Astrocyte of the cerebellum (primary cell): ENCODE measurements at regions of chr1 and their contacts with region 1.

Region 1: DNA sequence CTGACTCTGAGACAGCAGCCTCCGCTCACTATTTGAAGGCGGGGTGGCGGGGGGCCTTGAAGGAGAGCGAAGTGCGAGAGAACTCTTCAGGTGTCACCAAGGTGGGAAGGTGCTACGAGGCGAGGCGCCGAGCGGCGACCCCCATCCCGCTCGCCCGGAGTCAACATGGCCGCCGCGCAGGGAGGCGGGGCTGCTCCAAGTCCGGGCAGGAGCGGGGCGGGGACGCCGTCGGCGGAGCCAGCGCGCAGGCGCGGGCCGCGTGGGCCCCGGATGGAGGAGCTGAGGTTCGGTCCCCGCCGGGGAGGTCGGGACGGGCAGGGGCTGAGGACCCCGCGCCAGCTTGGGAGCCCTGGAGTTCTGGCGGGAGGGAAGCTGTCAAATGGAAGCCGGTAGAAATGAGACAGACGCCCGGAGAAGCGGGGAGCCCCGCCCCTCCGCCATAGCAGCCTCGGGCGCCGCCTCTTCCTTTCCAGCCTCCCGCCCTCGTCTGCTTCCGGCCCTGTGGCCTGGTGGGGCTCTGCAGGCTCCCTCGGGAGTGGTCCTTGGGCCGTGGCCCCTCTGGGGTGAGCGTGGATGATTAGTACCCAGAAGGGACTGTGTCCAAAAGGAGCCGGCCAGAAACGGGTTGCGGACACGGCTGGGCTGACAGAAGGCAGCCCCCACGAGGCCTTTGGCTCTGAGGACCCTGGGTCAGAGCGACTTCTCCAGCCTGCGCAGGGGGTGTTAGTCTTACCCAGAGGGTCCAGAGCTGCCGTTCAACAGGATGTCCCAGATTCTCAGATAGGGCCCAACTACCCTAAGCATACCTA is at the start of gene PIGV:
- DNase-seq: peak; percentile 38
- H3K4me3 ChIP-seq: peak within 1 kb of the TSS; percentile 62
- CTCF ChIP-seq: no peak

Region 2: GRCh38 chr1:26602378-26602959 is 185.4 kb before region 1 on chr1:
- in situ Hi-C with region 1: loop called (anchors 5 kb)
- DNase-seq: peak; percentile 50
- H3K4me3 ChIP-seq: no peak overlapping the region
- CTCF ChIP-seq: peak; percentile 75

Region 3: DNA sequence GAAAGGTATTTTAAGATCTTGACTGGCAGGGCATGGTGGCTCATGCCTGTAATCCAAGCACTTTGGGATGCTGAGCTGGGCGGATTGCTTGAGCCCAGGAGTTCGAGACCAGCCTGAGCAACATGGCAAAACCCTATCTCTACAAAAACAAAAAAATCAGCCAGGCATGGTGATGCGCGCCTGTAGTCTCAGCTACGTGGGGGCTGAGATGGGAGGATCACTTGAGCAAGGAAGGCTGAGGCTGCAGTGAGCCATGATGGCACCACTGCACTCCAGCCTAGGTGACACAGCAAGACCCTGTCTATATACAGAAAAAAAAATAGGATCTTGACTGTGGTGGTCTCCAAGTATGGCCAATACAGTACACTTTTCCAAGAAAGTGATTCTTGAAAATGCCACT is 76.1 kb before region 1 on chr1:
- in situ Hi-C with region 1: loop called (anchors 5 kb)
- DNase-seq: no peak
- H3K4me3 ChIP-seq: no peak overlapping the region
- CTCF ChIP-seq: no peak

Region 4: GRCh38 chr1:26833432-26834405 is 45.8 kb after region 1 on chr1:
- in situ Hi-C with region 1: loop called (anchors 5 kb)
- DNase-seq: no peak
- H3K4me3 ChIP-seq: no peak overlapping the region
- CTCF ChIP-seq: no peak

Region 5: DNA sequence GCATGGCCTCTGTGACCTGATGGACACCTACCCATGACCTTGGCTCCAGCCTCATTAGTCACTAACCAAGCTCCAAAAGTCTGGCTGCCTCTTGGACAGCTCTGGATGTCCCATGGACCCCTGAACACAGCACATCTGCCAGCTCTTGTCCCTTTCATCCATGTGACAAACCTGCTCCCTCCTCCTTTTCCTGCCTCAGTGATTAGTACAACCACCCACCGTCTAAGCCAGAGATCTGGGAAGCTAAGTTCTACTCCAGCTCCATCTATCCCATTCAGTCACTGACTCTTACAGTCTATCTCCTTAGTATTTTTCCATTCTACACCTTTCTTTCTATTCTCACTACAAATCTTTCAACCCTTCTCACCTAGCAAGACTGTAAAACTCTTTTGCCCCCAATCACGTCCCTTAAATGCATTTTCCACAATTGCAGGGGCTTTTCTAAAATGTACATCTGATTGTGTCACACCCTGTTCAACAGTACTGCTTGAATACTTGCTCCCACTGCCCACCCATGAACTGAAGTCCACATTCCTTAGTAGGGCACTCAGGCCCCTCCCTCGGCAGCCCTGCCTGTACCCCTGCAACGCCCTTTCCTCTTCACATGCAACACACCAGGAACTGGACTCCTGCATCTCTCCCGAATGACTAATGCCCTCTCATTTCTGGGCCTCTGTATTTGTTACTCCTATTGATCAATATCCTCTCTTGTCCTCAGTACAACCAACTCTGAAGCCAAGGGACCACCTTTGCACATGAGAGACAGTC is 95.0 kb after region 1 on chr1:
- in situ Hi-C with region 1: loop called (anchors 5 kb)
- DNase-seq: no peak
- H3K4me3 ChIP-seq: no peak overlapping the region
- CTCF ChIP-seq: no peak